ENCODE measurements at regions of chr12 and their contacts with region 1.

Region 1: DNA sequence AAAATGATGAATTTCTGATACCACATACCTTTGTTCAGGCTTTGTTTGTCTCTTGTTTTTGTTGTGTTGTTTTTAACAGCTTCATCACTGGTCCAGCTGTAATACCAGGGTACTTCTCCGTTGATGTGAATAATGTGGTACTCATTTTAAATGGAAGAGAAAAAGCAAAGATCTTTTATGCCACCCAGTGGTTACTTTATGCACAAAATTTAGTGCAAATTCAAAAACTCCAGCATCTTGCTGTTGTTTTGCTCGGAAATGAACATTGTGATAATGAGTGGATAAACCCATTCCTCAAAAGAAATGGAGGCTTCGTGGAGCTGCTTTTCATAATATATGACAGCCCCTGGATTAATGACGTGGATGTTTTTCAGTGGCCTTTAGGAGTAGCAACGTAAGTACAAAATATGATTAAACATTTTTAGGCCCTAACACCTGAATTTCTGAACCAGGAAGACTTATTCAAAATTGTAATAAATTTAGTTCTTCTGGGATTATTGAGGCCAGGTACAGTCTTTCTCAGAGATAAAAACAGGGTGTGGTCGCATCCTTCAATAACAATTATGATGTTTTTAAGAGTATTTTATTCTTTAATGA is 22.4 kb downstream of the RXYLT1 start:
- DNase-seq: peak; percentile 55
- H3K4me3 Mint-ChIP-seq: no peak overlapping the region
- H3K27ac Mint-ChIP-seq: no peak overlapping the region
- H3K4me1 Mint-ChIP-seq: peaks cover 1% of the 10 kb centered on the region
- H3K27me3 Mint-ChIP-seq: no peaks in the 10 kb centered on the region

Region 2: GRCh38 chr12:63103494-63104131 is 698.5 kb before region 1 on chr12:
- intact Hi-C with region 1: loop called (anchors 2 kb)
- DNase-seq: peak; percentile 60
- H3K4me3 Mint-ChIP-seq: no peak overlapping the region
- H3K27ac Mint-ChIP-seq: no peak overlapping the region
- H3K4me1 Mint-ChIP-seq: no peaks in the 10 kb centered on the region
- H3K27me3 Mint-ChIP-seq: no peaks in the 10 kb centered on the region

Region 3: DNA sequence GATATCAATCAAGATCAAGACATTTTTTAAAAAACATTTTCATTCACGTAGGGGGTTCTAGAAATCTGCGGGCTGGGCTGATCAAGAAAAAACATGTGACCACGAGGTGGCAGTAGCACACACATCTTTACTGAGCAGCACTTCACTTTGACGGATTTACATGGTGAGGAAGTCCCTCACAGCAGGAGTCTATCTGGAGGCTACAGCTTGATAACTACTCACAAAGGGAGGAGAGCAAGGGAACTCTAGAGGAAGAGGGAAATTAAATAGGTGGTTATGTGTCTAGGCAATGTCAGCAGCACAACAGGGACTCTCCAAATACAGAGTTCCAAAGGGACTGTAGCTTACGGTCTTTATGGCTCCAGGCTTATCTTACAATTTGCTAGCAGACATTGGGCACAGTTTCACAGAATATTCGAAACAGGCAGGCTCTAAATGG is 381.9 kb before region 1 on chr12:
- intact Hi-C with region 1: loop called (anchors 5 kb)
- DNase-seq: peak; percentile 79
- H3K4me3 Mint-ChIP-seq: no peak overlapping the region
- H3K27ac Mint-ChIP-seq: no peak overlapping the region
- H3K4me1 Mint-ChIP-seq: no peaks in the 10 kb centered on the region
- H3K27me3 Mint-ChIP-seq: no peaks in the 10 kb centered on the region

Region 4: GRCh38 chr12:63668028-63668799 is 133.9 kb before region 1 on chr12 and contains the start of gene DPY19L2:
- intact Hi-C with region 1: loop called (anchors 5 kb)
- DNase-seq: peak; percentile 75
- H3K4me3 Mint-ChIP-seq: peak within 1 kb of the TSS; percentile 87
- H3K27ac Mint-ChIP-seq: peak within 1 kb of the TSS; percentile 60
- H3K4me1 Mint-ChIP-seq: peaks cover 10% of the 10 kb centered on the region
- H3K27me3 Mint-ChIP-seq: peaks cover 38% of the 10 kb centered on the region
- total RNA-seq, gene DPY19L2: 0.61 and 0.80 TPM in 2 replicates

Measured in activated CD4-positive, alpha-beta T cell treated with anti-CD3 and anti-CD28 coated beads, Interleukin-2, amount 10 ng/mL, durations not matched to agents 24 days and 14 days (primary cell).